ENCODE measurements at regions of chr10 and their contacts with region 1.

Region 1: GRCh38 chr10:103564776-103565520 is 71.4 kb downstream of the NEURL1 start:
- DNase-seq: peak; percentile 74
- ATAC-seq: peak; percentile 85
- H3K4me3 Mint-ChIP-seq: no peak overlapping the region
- H3K27ac Mint-ChIP-seq: no peak overlapping the region
- H3K4me1 Mint-ChIP-seq: no peaks in the 10 kb centered on the region
- H3K27me3 Mint-ChIP-seq: peaks cover 2% of the 10 kb centered on the region
- CTCF ChIP-seq: peak; percentile 92

Region 2: GRCh38 chr10:103265717-103266329 is 299.1 kb before region 1 on chr10:
- CTCF ChIA-PET with region 1: no interaction called
- POLR2A ChIA-PET with region 1: no interaction called
- intact Hi-C with region 1: no loop called
- DNase-seq: peak; percentile 64
- ATAC-seq: no peak
- H3K4me3 Mint-ChIP-seq: no peak overlapping the region
- H3K27ac Mint-ChIP-seq: no peak overlapping the region
- H3K4me1 Mint-ChIP-seq: peaks cover 3% of the 10 kb centered on the region
- H3K27me3 Mint-ChIP-seq: peaks cover 39% of the 10 kb centered on the region
- CTCF ChIP-seq: no peak

Region 3: GRCh38 chr10:103504181-103504783 is 60.7 kb before region 1 on chr10:
- CTCF ChIA-PET with region 1: interaction called, 29 read pairs
- POLR2A ChIA-PET with region 1: no interaction called
- intact Hi-C with region 1: no loop called
- DNase-seq: peak; percentile 65
- ATAC-seq: peak; percentile 89
- H3K4me3 Mint-ChIP-seq: no peak overlapping the region
- H3K27ac Mint-ChIP-seq: peak overlapping the region; percentile 41
- H3K4me1 Mint-ChIP-seq: peaks cover 23% of the 10 kb centered on the region
- H3K27me3 Mint-ChIP-seq: peaks cover 32% of the 10 kb centered on the region
- CTCF ChIP-seq: no peak

Region 4: DNA sequence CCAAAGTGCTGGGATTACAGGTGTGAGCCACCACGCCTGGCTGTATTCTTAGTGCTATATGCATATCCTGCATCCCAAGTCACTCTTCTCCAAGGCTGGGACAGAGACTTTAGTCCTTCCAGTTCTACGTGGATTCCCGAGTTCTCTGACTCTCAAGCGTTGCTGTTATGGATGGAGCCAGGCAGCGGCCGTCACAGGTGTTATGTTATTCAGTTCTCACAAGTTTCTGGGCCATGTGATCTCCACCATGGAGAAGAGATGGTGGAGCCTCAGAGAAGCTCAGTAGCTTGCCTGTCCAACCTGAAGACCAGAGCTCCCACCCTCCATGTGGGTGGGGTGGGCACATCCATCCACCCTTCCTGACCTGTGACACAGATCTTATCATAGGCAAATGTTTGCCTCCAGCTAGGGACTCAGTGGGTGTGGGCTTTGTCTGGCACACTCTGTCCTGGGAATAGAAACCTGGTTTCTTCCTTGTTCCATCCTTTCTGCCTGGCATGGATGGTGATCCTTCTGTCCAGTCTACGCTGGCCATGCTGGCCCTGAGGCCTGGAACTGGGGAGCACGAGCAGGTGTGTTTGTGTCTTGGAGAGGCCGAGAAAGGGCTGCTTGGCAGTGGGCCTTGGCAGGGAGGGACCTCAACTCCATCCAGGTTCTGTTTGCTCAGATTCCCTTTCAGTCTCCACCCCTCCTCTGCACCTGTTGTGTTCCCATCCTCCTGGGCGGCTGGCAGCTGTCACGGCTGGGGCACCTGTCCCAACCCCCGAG is 16.2 kb before region 1 on chr10:
- CTCF ChIA-PET with region 1: interaction called, 21 read pairs
- POLR2A ChIA-PET with region 1: interaction called, 4 read pairs
- intact Hi-C with region 1: no loop called
- DNase-seq: no peak
- ATAC-seq: no peak
- H3K4me3 Mint-ChIP-seq: no peak overlapping the region
- H3K27ac Mint-ChIP-seq: no peak overlapping the region
- H3K4me1 Mint-ChIP-seq: peaks cover 4% of the 10 kb centered on the region
- H3K27me3 Mint-ChIP-seq: peaks cover 4% of the 10 kb centered on the region
- CTCF ChIP-seq: no peak

Region 5: GRCh38 chr10:103578782-103579382 is 13.9 kb after region 1 on chr10:
- CTCF ChIA-PET with region 1: interaction called, 32 read pairs
- POLR2A ChIA-PET with region 1: no interaction called
- intact Hi-C with region 1: no loop called
- DNase-seq: no peak
- ATAC-seq: no peak
- H3K4me3 Mint-ChIP-seq: no peak overlapping the region
- H3K27ac Mint-ChIP-seq: no peak overlapping the region
- H3K4me1 Mint-ChIP-seq: peaks cover 2% of the 10 kb centered on the region
- H3K27me3 Mint-ChIP-seq: peaks cover under 1% of the 10 kb centered on the region
- CTCF ChIP-seq: no peak